ENCODE measurements at regions of chr15 and their contacts with region 1.

Region 1: GRCh38 chr15:52370010-52370409 is 74.4 kb upstream of the MYO5C start:
- DNase-seq: peak; percentile 45
- H3K4me3 Mint-ChIP-seq: peak overlapping the region; percentile 39
- H3K27ac Mint-ChIP-seq: no peak overlapping the region
- H3K4me1 Mint-ChIP-seq: no peaks in the 10 kb centered on the region
- H3K27me3 Mint-ChIP-seq: no peaks in the 10 kb centered on the region
- CTCF ChIP-seq: no peak

Region 2: GRCh38 chr15:53033709-53034108 is 663.7 kb after region 1 on chr15:
- CTCF ChIA-PET with region 1: interaction called, 10 read pairs
- intact Hi-C with region 1: no loop called
- DNase-seq: no peak
- H3K4me3 Mint-ChIP-seq: no peak overlapping the region
- H3K27ac Mint-ChIP-seq: no peak overlapping the region
- H3K4me1 Mint-ChIP-seq: no peaks in the 10 kb centered on the region
- H3K27me3 Mint-ChIP-seq: peaks cover 19% of the 10 kb centered on the region
- CTCF ChIP-seq: no peak

Measured in Calu3 (cell line).